A673 (cell line): ENCODE measurements at regions of chr6 and their contacts with region 1.

Region 1: GRCh38 chr6:19452495-19452894 is 384.7 kb upstream of the ID4 start:
- DNase-seq: no peak
- H3K4me3 ChIP-seq: no peak overlapping the region
- H3K27ac ChIP-seq: no peak overlapping the region
- H3K4me1 ChIP-seq: no peaks in the 10 kb centered on the region
- H3K27me3 ChIP-seq: no peaks in the 10 kb centered on the region
- CTCF ChIP-seq: no peak

Region 2: GRCh38 chr6:19538077-19538512 is 85.6 kb after region 1 on chr6:
- CTCF ChIA-PET with region 1: interaction called, 11 read pairs
- POLR2A ChIA-PET with region 1: no interaction called
- intact Hi-C with region 1: no loop called
- DNase-seq: no peak
- H3K4me3 ChIP-seq: no peak overlapping the region
- H3K27ac ChIP-seq: no peak overlapping the region
- H3K4me1 ChIP-seq: no peaks in the 10 kb centered on the region
- H3K27me3 ChIP-seq: no peaks in the 10 kb centered on the region
- CTCF ChIP-seq: no peak